GM18951 (cell line): ENCODE measurements at regions of chr1 and their contacts with region 1.

Region 1: GRCh38 chr1:156096640-156097391 is 14.6 kb upstream of the MEX3A start:
- POLR2A ChIP-seq: no peak

Region 2: DNA sequence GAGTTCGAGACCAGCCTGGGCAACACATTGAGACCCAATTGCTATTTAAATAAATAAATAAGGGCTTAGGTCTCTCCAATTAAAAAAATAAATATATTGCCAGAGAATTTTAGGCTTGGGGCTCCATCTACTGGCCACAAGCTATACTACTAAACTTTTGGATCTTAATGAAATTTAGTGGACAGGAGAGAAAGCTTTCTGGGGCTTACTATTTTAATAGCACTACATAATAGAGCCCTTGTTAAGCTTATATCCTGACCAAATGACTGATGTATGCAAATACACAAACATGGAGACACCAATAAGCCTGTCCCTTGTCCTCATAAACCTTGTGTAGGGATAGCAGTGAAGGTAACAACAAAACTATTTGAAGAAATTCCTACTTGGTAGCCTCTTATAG is 222.8 kb after region 1 on chr1:
- in situ Hi-C with region 1: loop called (anchors 10 kb)
- POLR2A ChIP-seq: no peak